HEK293T (cell line): ENCODE measurements at regions of chr15 and their contacts with region 1.

Region 1: GRCh38 chr15:88904624-88905327 is 8.4 kb downstream of the MFGE8 start:
- DNase-seq: peak; percentile 86

Region 2: GRCh38 chr15:88894348-88894818 is 10.4 kb before region 1 on chr15:
- CTCF ChIA-PET with region 1: interaction called, 10 read pairs
- POLR2A ChIA-PET with region 1: interaction called, 3 read pairs
- DNase-seq: peak; percentile 87

Region 3: DNA sequence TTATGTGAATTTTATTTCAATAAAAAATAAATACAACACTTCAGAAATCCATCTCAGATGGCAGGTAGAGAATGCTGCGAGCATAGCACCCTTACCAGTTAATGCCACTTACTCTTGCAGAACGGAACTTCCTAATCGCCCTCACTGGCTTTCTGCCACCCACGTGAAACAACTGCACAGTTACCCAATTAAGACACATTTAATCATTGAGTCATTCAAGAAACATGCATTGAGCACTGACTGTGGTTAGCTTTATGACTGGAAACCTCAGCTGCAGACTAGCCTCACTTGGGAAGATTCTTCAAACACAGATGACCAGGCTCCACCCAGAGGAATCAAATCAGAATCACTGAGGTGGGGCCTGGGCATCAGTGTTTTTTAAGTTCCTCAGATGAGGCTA is 14.0 kb after region 1 on chr15:
- CTCF ChIA-PET with region 1: interaction called, 13 read pairs
- POLR2A ChIA-PET with region 1: interaction called, 4 read pairs
- DNase-seq: no peak

Region 4: DNA sequence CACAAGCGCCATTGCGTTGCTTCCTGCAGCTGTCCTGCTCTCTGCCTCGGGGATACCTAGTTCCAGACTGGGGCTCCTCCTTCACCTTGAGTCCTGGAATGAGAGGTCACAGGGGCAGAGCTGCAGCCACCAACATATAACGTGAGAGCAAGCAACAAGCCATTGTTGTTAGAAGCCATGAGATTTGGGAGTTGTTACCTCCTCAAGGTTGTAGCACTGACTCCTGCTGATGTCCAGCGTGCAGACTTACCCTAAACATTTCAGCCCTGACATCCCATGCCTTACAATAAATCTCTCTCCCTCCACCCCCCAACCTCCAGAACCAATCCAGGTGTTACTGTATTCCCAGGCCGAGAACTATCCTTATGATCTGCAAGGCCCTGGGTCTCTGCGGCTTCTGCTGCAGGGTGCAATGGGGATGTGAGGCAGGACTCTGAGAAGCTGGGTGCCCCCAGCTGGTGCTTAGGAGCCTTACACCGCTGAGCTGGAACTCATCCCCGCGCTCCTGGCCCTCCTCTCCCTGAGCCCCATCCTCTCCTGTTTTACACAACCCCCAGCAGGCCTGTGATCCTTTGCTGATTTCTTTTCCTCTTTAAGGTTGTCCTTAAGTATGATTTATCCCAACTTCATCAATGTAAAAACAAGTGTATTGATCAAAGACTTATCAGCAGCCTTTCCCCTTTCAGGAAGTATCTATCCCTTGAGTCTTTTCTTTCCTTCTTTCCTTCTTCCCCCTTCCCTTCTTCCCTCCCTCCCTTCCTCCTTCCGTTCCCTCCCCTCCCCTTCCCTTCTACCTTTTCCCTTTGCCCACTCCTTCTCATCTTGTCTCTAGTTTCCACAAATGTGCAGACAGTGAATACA is 99.3 kb after region 1 on chr15:
- CTCF ChIA-PET with region 1: interaction called, 20 read pairs
- POLR2A ChIA-PET with region 1: no interaction called
- DNase-seq: peak; percentile 59

Region 5: GRCh38 chr15:89017370-89018066 is 112.7 kb after region 1 on chr15:
- CTCF ChIA-PET with region 1: interaction called, 12 read pairs
- POLR2A ChIA-PET with region 1: no interaction called
- DNase-seq: peak; percentile 89